Common myeloid progenitor, CD34-positive (primary cell): ENCODE measurements at regions of chr9 and their contacts with region 1.

Region 1: GRCh38 chr9:36166101-36166927 is 2.9 kb upstream of the CCIN start:
- DNase-seq: peak; percentile 88 to 93 (median 93)
- H3K4me3 ChIP-seq: peak overlapping the region in 6 of 7 experiments; percentile 27 to 72 (median 55)
- H3K27ac ChIP-seq: no peak overlapping the region
- H3K4me1 ChIP-seq: peaks cover 0 to 26% (median 10%) of the 10 kb centered on the region in 4 experiments
- H3K27me3 ChIP-seq: peaks cover 0 to 3% (median 0%) of the 10 kb centered on the region in 5 experiments

Region 2: DNA sequence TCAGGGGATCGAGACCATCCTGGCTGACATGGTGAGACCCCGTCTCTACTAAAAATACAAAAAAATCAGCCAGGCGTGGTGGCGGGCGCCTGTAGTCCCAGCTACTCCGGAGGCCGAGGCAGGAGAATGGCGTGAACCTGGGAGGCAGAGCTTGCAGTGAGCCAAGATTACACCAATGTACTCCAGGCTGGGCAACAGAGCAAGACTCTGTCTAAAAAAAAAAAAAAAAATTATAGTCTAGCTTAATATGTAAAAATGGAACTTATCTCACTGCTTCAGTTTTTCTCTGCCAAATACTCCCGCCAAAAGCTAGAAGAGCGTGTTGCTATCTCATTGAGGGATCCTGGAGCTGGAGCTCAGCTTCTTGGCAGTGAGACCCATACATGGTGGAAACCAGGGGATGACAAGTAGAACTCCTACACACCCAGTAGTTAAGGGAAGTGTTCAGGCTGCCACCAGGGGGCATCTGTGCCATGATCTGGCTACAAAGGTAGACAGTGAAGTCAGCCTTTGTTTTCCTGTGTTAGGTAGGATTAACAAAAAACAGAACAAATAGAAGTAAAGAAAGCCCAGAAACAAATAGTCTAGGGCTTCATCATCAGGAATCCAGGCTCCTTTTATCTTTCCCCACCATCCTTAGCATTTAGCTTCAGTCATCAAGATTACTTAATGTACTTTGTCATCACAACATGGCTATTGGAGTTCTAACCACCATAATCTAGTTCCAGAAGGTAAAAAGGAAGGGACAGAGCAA is 63.4 kb before region 1 on chr9:
- CTCF ChIA-PET with region 1: interaction called, 214 read pairs
- POLR2A ChIA-PET with region 1: interaction called, 3 read pairs
- DNase-seq: peak; percentile 88 to 93 (median 91)
- H3K4me3 ChIP-seq: no peak overlapping the region
- H3K27ac ChIP-seq: no peak overlapping the region
- H3K4me1 ChIP-seq: peaks cover 0 to 3% (median 0%) of the 10 kb centered on the region in 4 experiments
- H3K27me3 ChIP-seq: no peaks in the 10 kb centered on the region

Region 3: GRCh38 chr9:36116593-36116992 is 49.7 kb before region 1 on chr9:
- CTCF ChIA-PET with region 1: interaction called, 14 read pairs
- POLR2A ChIA-PET with region 1: no interaction called
- DNase-seq: no peak
- H3K4me3 ChIP-seq: no peak overlapping the region
- H3K27ac ChIP-seq: no peak overlapping the region
- H3K4me1 ChIP-seq: no peaks in the 10 kb centered on the region
- H3K27me3 ChIP-seq: no peaks in the 10 kb centered on the region

Region 4: GRCh38 chr9:36136272-36136893 is 29.9 kb before region 1 on chr9 and contains the start of gene GLIPR2:
- CTCF ChIA-PET with region 1: interaction called, 106 read pairs
- POLR2A ChIA-PET with region 1: interaction called, 3 read pairs
- DNase-seq: peak in 2 of 3 donors; percentile 64 to 78
- H3K4me3 ChIP-seq: peak within 1 kb of the TSS; percentile 67 to 85 (median 75)
- H3K27ac ChIP-seq: no peak within 1 kb of the TSS
- H3K4me1 ChIP-seq: peaks cover 0 to 51% (median 45%) of the 10 kb centered on the region in 4 experiments
- H3K27me3 ChIP-seq: peaks cover 0 to 17% (median 2%) of the 10 kb centered on the region in 5 experiments

Region 5: DNA sequence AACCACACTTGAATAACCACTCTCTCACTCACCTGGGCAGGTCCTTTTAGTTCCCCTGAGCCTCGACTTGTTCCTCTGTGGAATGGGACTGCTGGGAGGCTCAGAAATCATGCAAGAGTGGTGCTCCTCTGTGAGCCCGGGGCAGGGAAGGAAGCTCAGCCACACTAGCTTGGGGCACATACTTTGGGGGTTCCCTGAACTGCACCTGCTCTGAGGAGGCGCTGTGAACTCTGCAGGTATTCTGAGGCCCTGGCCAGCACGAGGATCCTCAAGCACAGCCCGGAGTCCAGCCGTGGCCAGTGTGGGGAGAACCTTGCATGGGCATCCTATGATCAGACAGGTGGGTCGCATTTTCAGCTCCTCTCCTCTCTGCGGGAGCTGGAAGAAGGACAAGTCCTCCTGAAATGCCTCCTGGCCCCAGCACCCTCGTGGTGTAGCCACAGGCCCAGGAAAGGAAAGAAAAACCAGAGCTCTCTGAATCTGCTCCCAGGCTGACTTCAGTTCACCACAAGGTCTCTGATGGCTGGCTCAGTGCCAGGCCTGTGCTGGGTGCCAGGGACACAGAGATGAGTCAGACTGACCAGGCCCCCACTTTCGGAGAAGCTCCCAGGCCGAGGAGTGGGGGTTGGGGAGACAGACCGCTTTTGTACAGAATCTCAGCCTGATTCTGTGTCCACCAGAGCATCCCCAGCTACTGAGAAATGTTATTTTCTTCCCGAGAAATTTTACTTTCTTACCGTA is 17.8 kb before region 1 on chr9:
- CTCF ChIA-PET with region 1: interaction called, 106 read pairs
- POLR2A ChIA-PET with region 1: interaction called, 4 read pairs
- DNase-seq: peak in 2 of 3 donors; percentile 56 to 64
- H3K4me3 ChIP-seq: no peak overlapping the region
- H3K27ac ChIP-seq: no peak overlapping the region
- H3K4me1 ChIP-seq: peaks cover 21 to 75% (median 60%) of the 10 kb centered on the region in 4 experiments
- H3K27me3 ChIP-seq: no peaks in the 10 kb centered on the region

Region 6: GRCh38 chr9:36154331-36154952 is 11.9 kb before region 1 on chr9:
- CTCF ChIA-PET with region 1: interaction called, 47 read pairs
- POLR2A ChIA-PET with region 1: interaction called, 6 read pairs
- DNase-seq: peak in 2 of 3 donors; percentile 80 to 86
- H3K4me3 ChIP-seq: peak overlapping the region in 3 of 7 experiments; percentile 16 to 48 (median 30)
- H3K27ac ChIP-seq: peak overlapping the region; percentile 79 to 93
- H3K4me1 ChIP-seq: peaks cover 8 to 65% (median 57%) of the 10 kb centered on the region in 4 experiments
- H3K27me3 ChIP-seq: no peaks in the 10 kb centered on the region

Region 7: DNA sequence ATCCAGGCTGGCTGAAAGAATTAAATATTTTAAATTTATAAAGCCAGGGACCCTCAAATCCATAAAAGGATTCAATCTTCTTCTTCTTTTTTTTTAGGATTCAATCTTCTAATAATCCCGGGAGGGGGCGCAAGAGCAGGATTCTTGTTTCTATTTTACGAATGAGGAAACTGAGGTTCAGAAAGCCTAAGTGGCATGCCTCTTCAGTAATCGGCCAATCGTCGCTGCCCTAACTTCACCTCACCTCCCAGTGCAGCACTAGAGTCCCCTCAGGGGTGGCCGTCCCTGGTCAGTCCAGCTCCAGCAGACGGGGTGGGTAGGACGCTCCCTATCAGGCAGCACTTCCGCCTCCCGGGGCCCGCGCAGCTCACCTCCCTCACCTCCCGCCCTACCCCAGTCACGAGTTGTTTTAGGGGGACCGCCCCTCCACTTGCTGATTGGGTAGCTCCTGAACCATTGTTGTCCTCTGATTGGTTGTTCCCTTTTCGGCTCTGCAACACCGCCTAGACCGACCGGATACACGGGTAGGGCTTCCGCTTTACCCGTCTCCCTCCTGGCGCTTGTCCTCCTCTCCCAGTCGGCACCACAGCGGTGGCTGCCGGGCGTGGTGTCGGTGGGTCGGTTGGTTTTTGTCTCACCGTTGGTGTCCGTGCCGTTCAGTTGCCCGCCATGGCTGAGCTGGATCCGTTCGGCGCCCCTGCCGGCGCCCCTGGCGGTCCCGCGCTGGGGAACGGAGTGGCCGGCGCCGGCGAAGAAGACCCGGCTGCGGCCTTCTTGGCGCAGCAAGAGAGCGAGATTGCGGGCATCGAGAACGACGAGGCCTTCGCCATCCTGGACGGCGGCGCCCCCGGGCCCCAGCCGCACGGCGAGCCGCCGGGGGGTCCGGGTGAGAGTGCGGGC is 24.3 kb after region 1 on chr9 and contains the start of gene CLTA:
- CTCF ChIA-PET with region 1: interaction called, 20 read pairs
- POLR2A ChIA-PET with region 1: interaction called, 3 read pairs
- DNase-seq: peak; percentile 98 to 99 (median 98)
- H3K4me3 ChIP-seq: peak within 1 kb of the TSS; percentile 60 to 99 (median 94)
- H3K27ac ChIP-seq: peak within 1 kb of the TSS; percentile 79 to 94
- H3K4me1 ChIP-seq: peaks cover 24 to 41% (median 30%) of the 10 kb centered on the region in 4 experiments
- H3K27me3 ChIP-seq: no peaks in the 10 kb centered on the region